Cardiac septum (tissue), 1 donor: ENCODE measurements at regions of chr12 and their contacts with region 1.

Region 1: DNA sequence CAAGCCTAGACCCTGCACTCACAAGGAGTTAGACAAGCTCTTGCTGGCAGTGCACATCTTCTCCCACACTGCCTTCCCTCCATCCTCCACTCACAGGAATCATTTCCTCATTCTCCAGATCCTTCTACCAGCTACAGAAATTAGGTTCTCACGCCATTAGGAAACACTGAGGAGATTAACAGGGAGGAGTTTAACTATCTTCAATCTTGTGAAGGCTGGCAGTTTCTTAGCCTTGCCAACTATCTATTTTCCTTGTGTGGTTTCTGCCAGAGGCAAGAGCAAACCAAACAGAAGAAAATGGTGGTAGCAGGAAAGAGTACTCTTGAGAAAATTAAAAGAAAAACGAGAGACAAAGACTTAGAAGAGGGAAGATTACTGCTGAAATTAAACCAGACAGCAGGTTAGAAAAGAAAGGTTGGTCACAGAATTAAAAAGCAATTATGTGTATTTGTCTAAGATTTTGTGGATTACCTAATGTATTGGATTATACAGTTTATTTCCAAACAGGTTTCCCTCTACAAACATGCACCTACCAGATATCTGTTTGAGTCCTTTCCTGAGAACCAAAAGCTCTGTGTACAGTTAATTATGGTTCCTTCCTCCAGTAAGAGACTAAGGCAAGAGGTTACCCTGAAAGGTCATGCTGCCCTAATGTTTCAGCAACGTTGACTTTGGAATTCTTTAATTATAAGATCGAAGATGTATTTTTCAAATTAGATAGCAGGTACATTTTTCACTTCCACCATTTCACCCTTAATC is 5.0 kb downstream of the RERG start:
- DNase-seq: no peak

Region 2: GRCh38 chr12:15165012-15165659 is 51.1 kb before region 1 on chr12:
- intact Hi-C with region 1: loop called (anchors 5 kb)
- DNase-seq: no peak